Activated B cell treated with CpG ODN at 0.5 μM for 24 hours (primary cell): ENCODE measurements at regions of chr12 and their contacts with region 1.

Region 1: DNA sequence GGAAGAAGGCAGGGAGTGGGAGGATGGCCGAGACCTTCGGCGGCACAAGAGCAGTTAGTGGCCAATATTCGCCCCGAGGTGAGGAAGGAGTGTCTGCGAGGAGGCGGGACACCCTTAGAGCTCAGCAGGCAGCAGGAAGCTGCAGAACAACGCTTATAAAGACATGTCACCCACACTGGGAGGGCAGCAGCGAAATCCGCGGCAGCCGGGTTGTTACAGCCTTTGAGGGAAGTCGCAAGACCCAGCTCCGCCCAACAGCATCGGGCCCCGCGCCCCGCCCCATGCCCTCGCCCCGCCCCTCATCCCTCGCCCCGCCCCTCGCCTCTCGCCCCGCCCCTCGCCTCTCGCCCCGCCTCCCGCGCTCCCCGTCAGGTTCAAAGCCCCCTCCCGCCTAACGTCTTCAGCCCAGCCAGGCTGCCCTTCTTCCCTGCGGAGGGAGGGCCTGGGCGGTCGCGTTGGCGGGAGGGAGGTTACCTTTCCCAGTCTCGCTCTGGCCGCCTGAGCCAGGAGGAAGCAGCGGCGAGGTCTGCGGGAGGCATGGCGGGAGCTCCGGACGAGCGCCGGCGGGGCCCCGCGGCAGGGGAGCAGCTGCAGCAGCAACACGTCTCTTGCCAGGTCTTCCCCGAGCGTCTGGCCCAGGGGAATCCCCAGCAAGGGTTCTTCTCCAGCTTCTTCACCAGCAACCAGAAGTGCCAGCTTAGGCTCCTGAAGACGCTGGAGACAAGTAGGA is at the start of gene ATP23:
- DNase-seq: peak; percentile 86
- ATAC-seq: peak; percentile 89
- H3K4me3 Mint-ChIP-seq: peak within 1 kb of the TSS; percentile 96
- H3K27ac Mint-ChIP-seq: peak within 1 kb of the TSS; percentile 95
- H3K4me1 Mint-ChIP-seq: peaks cover 22% of the 10 kb centered on the region
- H3K27me3 Mint-ChIP-seq: no peaks in the 10 kb centered on the region
- CTCF ChIP-seq: no peak
- total RNA-seq, gene ATP23: 3.0 and 3.9 TPM in 2 replicates

Region 2: GRCh38 chr12:57929092-57929830 is 12.1 kb before region 1 on chr12:
- CTCF ChIA-PET with region 1: no interaction called
- POLR2A ChIA-PET with region 1: interaction called, 10 read pairs
- intact Hi-C with region 1: no loop called
- DNase-seq: no peak
- ATAC-seq: no peak
- H3K4me3 Mint-ChIP-seq: no peak overlapping the region
- H3K27ac Mint-ChIP-seq: no peak overlapping the region
- H3K4me1 Mint-ChIP-seq: peaks cover under 1% of the 10 kb centered on the region
- H3K27me3 Mint-ChIP-seq: no peaks in the 10 kb centered on the region
- CTCF ChIP-seq: no peak